Endothelial cell of umbilical vein (primary cell): ENCODE measurements at regions of chr9 and their contacts with region 1.

Region 1: GRCh38 chr9:9790216-9790872 is 822.5 kb downstream of the PTPRD start:
- DNase-seq: peak; percentile 69
- H3K4me3 ChIP-seq: no peak overlapping the region
- H3K27ac ChIP-seq: no peak overlapping the region
- H3K4me1 ChIP-seq: no peaks in the 10 kb centered on the region
- H3K27me3 ChIP-seq: peaks cover 0 to 2% of the 10 kb centered on the region in 2 experiments
- CTCF ChIP-seq: peak; percentile 63 to 76
- POLR2A ChIP-seq: no peak

Region 2: GRCh38 chr9:9352877-9353481 is 437.4 kb before region 1 on chr9:
- CTCF ChIA-PET with region 1: interaction called, 5 read pairs
- POLR2A ChIA-PET with region 1: no interaction called
- dilution Hi-C with region 1: no loop called
- intact Hi-C with region 1: loop called (anchors 10 kb)
- DNase-seq: peak; percentile 1
- H3K4me3 ChIP-seq: no peak overlapping the region
- H3K27ac ChIP-seq: no peak overlapping the region
- H3K4me1 ChIP-seq: no peaks in the 10 kb centered on the region
- H3K27me3 ChIP-seq: no peaks in the 10 kb centered on the region
- CTCF ChIP-seq: peak; percentile 40 to 42
- POLR2A ChIP-seq: no peak

Region 3: GRCh38 chr9:9612270-9612669 is 178.1 kb before region 1 on chr9:
- CTCF ChIA-PET with region 1: interaction called, 806 read pairs
- POLR2A ChIA-PET with region 1: interaction called, 11 read pairs
- dilution Hi-C with region 1: no loop called
- intact Hi-C with region 1: no loop called
- DNase-seq: peak; percentile 30
- H3K4me3 ChIP-seq: no peak overlapping the region
- H3K27ac ChIP-seq: no peak overlapping the region
- H3K4me1 ChIP-seq: no peaks in the 10 kb centered on the region
- H3K27me3 ChIP-seq: peaks cover 0 to 2% of the 10 kb centered on the region in 2 experiments
- CTCF ChIP-seq: no peak
- POLR2A ChIP-seq: no peak

Region 4: DNA sequence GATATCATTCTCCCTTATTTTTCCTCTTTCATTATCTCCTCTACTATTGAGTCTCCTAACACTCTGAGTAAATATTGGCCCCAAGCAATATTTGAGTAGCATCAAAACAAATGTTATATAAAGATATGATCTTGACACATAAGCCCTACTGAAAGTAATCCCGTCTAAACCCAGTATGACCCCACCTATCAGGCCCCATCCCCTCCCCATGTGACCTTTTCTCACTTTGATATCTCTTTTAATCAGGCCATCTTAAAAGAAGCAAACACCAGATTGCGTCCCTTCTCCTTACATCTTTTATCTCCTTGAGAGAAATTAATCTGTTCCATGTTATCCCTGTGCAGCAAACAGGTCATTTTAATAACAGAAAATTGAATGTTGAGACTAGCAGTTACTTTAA is 109.0 kb before region 1 on chr9:
- CTCF ChIA-PET with region 1: interaction called, 3 read pairs
- POLR2A ChIA-PET with region 1: no interaction called
- dilution Hi-C with region 1: no loop called
- intact Hi-C with region 1: loop called (anchors 5 kb)
- DNase-seq: no peak
- H3K4me3 ChIP-seq: no peak overlapping the region
- H3K27ac ChIP-seq: no peak overlapping the region
- H3K4me1 ChIP-seq: no peaks in the 10 kb centered on the region
- H3K27me3 ChIP-seq: no peaks in the 10 kb centered on the region
- CTCF ChIP-seq: no peak
- POLR2A ChIP-seq: no peak

Region 5: DNA sequence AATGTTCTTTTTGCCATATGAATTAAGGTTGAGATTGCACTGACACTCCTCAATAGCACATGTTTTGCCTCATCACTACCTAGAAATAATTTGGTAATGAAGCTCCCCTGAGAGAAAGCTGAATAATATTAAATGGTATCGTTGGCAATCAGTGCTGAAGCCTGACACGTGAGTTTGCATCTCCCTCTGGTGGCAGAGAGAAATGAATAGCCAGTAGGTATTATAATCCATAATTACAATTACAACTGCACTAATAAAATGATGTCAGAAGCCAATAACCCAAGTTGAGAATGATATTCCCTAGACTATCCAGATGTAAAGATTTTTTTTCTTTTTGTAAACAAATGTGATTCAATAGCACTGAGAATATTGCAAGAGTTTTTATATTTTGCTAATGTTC is 122.1 kb after region 1 on chr9:
- CTCF ChIA-PET with region 1: interaction called, 23 read pairs
- POLR2A ChIA-PET with region 1: no interaction called
- dilution Hi-C with region 1: no loop called
- intact Hi-C with region 1: no loop called
- DNase-seq: peak; percentile 12
- H3K4me3 ChIP-seq: no peak overlapping the region
- H3K27ac ChIP-seq: no peak overlapping the region
- H3K4me1 ChIP-seq: no peaks in the 10 kb centered on the region
- H3K27me3 ChIP-seq: no peaks in the 10 kb centered on the region
- CTCF ChIP-seq: peak; percentile 18 to 28
- POLR2A ChIP-seq: no peak